Upper lobe of right lung (tissue), 1 donor: ENCODE measurements at regions of chr2 and their contacts with region 1.

Region 1: GRCh38 chr2:105362862-105363591 is 25.7 kb downstream of the C2orf49 start:
- DNase-seq: no peak
- ATAC-seq: no peak
- H3K4me3 ChIP-seq: no peak overlapping the region
- H3K27ac ChIP-seq: no peak overlapping the region
- H3K4me1 ChIP-seq: no peaks in the 10 kb centered on the region
- H3K27me3 ChIP-seq: no peaks in the 10 kb centered on the region
- CTCF ChIP-seq: no peak

Region 2: DNA sequence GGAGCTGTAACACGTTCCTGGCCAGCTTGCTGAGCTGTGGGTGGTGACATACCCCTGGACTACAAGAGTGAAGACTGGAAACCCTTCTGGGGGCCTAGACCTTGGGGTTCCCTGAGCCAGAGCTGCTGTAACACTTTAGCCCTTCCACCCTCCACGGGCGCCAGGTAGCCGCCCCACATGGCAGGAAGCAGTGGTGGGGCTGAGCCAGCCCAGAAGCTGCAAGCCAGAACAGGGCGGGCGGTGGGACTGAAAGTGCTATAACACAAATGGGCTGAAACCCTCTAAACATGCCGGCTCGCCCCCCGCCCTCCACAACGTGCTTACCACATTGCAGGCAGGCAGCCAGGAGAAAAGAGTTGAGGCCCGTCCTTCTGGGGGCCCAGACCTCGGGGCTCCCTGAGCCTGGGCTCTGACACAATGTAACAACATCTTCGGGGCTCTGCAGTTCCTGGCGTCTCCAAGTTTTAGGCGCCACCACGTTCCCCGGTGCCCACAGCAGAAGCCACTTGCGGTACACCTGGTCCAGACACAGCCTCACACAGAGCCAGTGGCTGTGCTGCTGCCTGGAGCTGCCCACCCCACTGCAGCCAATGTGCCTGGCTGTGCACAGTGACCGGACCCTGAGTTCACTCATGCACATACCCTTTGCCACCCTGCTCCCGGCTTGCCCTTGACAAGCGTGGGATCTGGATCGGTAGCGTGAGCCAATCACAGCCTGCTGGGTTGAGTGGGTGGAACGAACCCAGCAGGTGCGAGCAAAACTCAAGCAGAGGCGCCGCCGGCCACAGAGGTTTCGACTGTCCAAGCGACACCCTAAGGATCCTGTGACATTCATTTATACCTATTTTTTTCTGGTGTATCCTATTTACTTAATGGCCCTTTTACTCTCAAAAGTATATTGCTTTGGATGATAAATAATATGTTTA is 163.2 kb after region 1 on chr2:
- intact Hi-C with region 1: loop called (anchors 5 kb)
- DNase-seq: no peak
- ATAC-seq: peak; percentile 10
- H3K4me3 ChIP-seq: no peak overlapping the region
- H3K27ac ChIP-seq: no peak overlapping the region
- H3K4me1 ChIP-seq: no peaks in the 10 kb centered on the region
- H3K27me3 ChIP-seq: no peaks in the 10 kb centered on the region
- CTCF ChIP-seq: no peak